T-cell (primary cell): ENCODE measurements at regions of chr9 and their contacts with region 1.

Region 1: GRCh38 chr9:70172532-70172931 is 86.2 kb upstream of the SMC5 start:
- DNase-seq: no peak
- ATAC-seq: no peak
- H3K4me3 ChIP-seq: no peak overlapping the region
- H3K4me3 Mint-ChIP-seq: no peak overlapping the region
- H3K27ac ChIP-seq: no peak overlapping the region
- H3K27ac Mint-ChIP-seq: no peak overlapping the region
- H3K4me1 ChIP-seq: no peaks in the 10 kb centered on the region
- H3K4me1 Mint-ChIP-seq: no peaks in the 10 kb centered on the region
- H3K27me3 ChIP-seq: no peaks in the 10 kb centered on the region
- H3K27me3 Mint-ChIP-seq: no peaks in the 10 kb centered on the region

Region 2: GRCh38 chr9:72113056-72113455 is 1940.5 kb after region 1 on chr9:
- CTCF ChIA-PET with region 1: no interaction called
- POLR2A ChIA-PET with region 1: interaction called in 1 of 2 experiments, 18 read pairs
- DNase-seq: no peak
- ATAC-seq: no peak
- H3K4me3 ChIP-seq: no peak overlapping the region
- H3K4me3 Mint-ChIP-seq: no peak overlapping the region
- H3K27ac ChIP-seq: no peak overlapping the region
- H3K27ac Mint-ChIP-seq: no peak overlapping the region
- H3K4me1 ChIP-seq: no peaks in the 10 kb centered on the region
- H3K4me1 Mint-ChIP-seq: no peaks in the 10 kb centered on the region
- H3K27me3 ChIP-seq: no peaks in the 10 kb centered on the region
- H3K27me3 Mint-ChIP-seq: peaks cover 4 to 8% of the 10 kb centered on the region in 2 donors